G401 (cell line): ENCODE measurements at regions of chr17 and their contacts with region 1.

Region 1: DNA sequence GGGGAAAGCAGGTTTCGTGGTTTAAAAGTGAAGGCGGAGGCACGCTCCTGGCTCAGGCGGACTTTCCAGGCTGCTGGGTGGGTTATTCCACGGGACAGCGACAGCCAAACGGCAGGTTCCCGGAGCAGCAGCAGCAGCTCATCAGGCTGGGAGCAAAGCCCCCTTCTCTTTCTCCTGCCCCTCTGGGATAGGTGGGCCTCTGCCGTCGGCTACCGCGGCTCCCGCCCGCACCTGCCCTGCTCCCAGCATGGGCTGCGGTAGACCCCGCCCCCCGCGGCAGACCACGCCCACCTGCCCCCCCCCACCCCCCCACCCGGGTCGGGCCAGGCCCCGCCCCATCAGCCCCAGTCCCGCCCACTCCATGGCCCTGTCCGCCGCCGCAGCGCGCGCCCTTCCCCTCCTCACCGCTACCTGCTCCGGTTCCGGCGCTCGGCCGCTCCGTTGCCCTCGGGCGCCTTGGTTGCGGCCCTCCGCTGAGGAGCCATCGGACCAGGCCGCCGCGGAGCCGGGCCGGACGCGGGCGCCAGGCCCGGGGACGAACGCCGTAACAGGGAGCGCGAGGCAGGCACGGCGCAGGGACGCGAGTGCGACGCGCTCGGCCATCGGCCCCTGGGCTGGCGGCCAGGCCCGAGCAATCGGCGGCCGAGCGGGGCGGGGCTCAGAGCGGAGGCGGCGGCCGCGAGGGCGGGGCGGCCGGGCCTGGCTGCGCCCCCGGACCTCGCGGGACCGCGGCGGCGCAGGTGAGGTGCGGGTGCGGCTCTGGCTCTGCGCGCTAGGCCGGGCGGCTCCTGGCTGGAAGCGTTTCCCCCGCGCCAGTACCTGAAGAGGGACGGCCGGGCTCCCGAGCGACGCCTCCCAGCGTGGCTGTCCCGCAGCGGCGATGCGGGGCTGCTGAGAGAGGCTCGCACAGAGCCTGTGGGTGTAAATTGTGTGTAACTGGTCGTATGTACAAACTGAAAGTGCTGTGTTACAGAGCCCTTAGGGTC is at the starts of genes HEXD and OGFOD3:
- DNase-seq: peak; percentile 85
- total RNA-seq, gene HEXD: 27.4 and 45.3 TPM in 2 replicates
- total RNA-seq, gene OGFOD3: 24.7 and 65.0 TPM in 2 replicates

Region 2: DNA sequence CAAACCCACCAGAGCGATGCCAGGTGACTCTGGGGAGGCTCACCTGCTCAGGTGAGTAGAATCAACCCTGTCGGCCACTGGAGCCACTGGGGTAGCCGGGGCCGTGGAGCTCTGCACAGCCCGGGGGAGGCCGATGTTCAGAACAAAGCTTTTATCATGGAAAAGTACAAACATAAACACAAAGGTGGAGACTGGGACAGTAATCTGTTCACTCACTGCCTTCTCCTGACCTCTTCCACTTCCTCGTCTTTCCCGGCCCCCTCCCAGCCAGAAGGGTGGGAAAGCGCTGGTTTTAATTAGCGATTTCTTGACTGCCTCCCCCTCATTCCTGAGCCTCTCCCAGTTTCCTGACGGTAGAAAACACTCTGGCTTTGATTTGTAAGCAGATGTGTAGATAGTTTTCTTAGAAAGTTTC is 69.0 kb before region 1 on chr17:
- in situ Hi-C with region 1: loop called (anchors 10 kb)
- DNase-seq: peak; percentile 51

Region 3: GRCh38 chr17:82361885-82362633 is 56.2 kb before region 1 on chr17:
- in situ Hi-C with region 1: loop called (anchors 5 kb)
- DNase-seq: no peak